Vagina (tissue), 2 donors: ENCODE measurements at regions of chr9 and their contacts with region 1.

Region 1: GRCh38 chr9:129177791-129178559 is at the start of gene IER5L:
- DNase-seq: peak in 1 of 2 donors; percentile 97
- H3K4me3 ChIP-seq: peak within 1 kb of the TSS; percentile 77 to 99
- H3K27ac ChIP-seq: peak within 1 kb of the TSS; percentile 99
- H3K4me1 ChIP-seq: peaks cover 29% of the 10 kb centered on the region
- H3K27me3 ChIP-seq: no peaks in the 10 kb centered on the region
- CTCF ChIP-seq: no peak
- POLR2A ChIP-seq: peak in 1 of 2 donors; percentile 97
- total RNA-seq, gene IER5L: 34.4 TPM

Region 2: GRCh38 chr9:129258124-129258822 is 80.3 kb after region 1 on chr9:
- intact Hi-C with region 1: loop called (anchors 10 kb)
- DNase-seq: no peak
- H3K4me3 ChIP-seq: peak overlapping the region; percentile 29 to 48
- H3K27ac ChIP-seq: peak overlapping the region; percentile 67
- H3K4me1 ChIP-seq: peaks cover 30% of the 10 kb centered on the region
- H3K27me3 ChIP-seq: no peaks in the 10 kb centered on the region
- CTCF ChIP-seq: no peak
- POLR2A ChIP-seq: no peak

Region 3: GRCh38 chr9:129317179-129318011 is 139.4 kb after region 1 on chr9:
- intact Hi-C with region 1: loop called (anchors 5 kb)
- DNase-seq: peak in 1 of 2 donors; percentile 85
- H3K4me3 ChIP-seq: no peak overlapping the region
- H3K27ac ChIP-seq: peak overlapping the region; percentile 96
- H3K4me1 ChIP-seq: peaks cover 73% of the 10 kb centered on the region
- H3K27me3 ChIP-seq: no peaks in the 10 kb centered on the region
- CTCF ChIP-seq: no peak
- POLR2A ChIP-seq: no peak

Region 4: DNA sequence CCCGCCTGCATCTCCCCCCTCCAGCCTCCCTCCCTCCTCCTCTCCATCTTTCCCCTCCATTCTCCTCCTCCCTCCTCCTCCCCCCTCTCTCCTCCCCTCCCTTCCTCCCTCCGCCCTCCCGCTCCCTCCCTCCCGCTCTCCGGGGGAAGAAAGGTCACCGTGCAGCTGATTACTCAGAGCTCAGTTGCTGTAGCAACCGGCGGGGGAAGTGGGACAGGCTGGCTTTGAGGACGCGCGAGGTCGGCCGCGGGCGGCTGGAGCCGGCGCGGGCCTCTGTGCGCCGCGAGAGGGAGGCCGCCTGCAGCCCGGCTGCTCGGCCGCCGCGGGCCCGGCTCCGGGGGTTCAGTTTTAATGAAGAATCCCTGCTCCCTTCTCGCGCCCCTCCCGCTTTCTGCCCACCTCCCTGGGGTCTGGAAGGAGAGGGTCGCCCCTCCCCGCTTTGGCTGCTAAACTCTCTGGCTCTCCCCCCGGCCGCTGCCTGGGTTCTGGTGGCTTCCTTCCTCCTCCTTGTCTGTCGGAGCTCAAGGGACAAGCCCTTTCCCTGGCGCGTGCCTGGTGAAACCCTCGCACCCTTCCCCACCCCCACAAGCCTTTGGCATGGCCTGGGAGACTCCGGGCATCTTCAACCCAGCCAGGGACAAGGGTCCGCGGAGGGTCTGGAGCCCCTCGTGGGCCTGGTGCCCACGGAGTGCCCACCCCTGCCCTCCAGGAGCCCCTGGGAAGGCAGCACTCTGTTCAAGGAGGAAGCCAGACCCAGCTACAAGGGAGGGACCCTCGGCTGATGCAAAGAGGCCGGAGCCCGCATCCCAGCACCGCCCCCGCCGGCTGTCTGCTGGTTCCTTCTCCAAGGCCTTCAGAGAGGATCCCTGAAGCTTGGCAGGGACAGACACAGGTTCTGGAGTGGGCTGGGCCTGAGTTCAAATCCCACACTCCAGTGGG is 282.6 kb after region 1 on chr9:
- intact Hi-C with region 1: no loop called
- DNase-seq: peak in 1 of 2 donors; percentile 98
- H3K4me3 ChIP-seq: peak overlapping the region; percentile 49 to 57
- H3K27ac ChIP-seq: peak overlapping the region; percentile 100
- H3K4me1 ChIP-seq: peaks cover 71% of the 10 kb centered on the region
- H3K27me3 ChIP-seq: no peaks in the 10 kb centered on the region
- CTCF ChIP-seq: no peak
- POLR2A ChIP-seq: peak in 1 of 2 donors; percentile 93